PC-9 (cell line): ENCODE measurements at regions of chr7 and their contacts with region 1.

Region 1: DNA sequence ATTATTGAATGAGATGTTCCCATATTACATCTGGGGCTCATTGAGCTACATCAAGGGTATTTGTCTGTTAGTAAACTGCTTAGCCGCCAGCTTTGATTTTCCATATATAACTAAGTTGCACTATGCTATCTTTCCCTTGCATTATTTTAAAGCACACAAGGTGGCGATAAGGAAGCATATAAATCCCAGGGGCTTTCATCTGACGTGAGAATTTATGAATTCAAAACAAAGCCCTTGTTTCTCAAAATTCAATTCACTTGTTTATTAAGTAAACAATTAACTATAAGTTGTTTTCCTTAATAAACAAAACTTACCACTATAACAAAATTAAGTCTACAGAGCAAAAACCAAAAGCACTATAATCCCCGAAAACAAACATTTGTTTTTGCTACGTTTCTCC is 334.1 kb upstream of the TPK1 start:
- DNase-seq: no peak
- H3K4me3 ChIP-seq: no peak overlapping the region
- H3K27ac ChIP-seq: no peak overlapping the region
- H3K4me1 ChIP-seq: no peaks in the 10 kb centered on the region
- H3K27me3 ChIP-seq: no peaks in the 10 kb centered on the region
- CTCF ChIP-seq: peak; percentile 52

Region 2: GRCh38 chr7:145219461-145219860 is 49.5 kb after region 1 on chr7:
- CTCF ChIA-PET with region 1: no interaction called
- POLR2A ChIA-PET with region 1: no interaction called
- intact Hi-C with region 1: no loop called
- DNase-seq: no peak
- H3K4me3 ChIP-seq: no peak overlapping the region
- H3K27ac ChIP-seq: no peak overlapping the region
- H3K4me1 ChIP-seq: no peaks in the 10 kb centered on the region
- H3K27me3 ChIP-seq: no peaks in the 10 kb centered on the region
- CTCF ChIP-seq: no peak

Region 3: GRCh38 chr7:146090023-146090645 is 920.2 kb after region 1 on chr7:
- CTCF ChIA-PET with region 1: no interaction called
- POLR2A ChIA-PET with region 1: no interaction called
- intact Hi-C with region 1: loop called (anchors 1 kb)
- DNase-seq: peak; percentile 15 to 49
- H3K4me3 ChIP-seq: no peak overlapping the region
- H3K27ac ChIP-seq: no peak overlapping the region
- H3K4me1 ChIP-seq: no peaks in the 10 kb centered on the region
- H3K27me3 ChIP-seq: no peaks in the 10 kb centered on the region
- CTCF ChIP-seq: peak; percentile 94